ENCODE measurements at regions of chr10 and their contacts with region 1.

Region 1: GRCh38 chr10:100148353-100149211 is 37.2 kb downstream of the ERLIN1 start:
- DNase-seq: no peak
- H3K4me3 Mint-ChIP-seq: peak overlapping the region; percentile 40
- H3K27ac Mint-ChIP-seq: peak overlapping the region; percentile 92
- H3K4me1 Mint-ChIP-seq: peaks cover 26% of the 10 kb centered on the region
- H3K27me3 Mint-ChIP-seq: peaks cover 2% of the 10 kb centered on the region

Region 2: GRCh38 chr10:100100651-100101184 is 47.9 kb before region 1 on chr10:
- intact Hi-C with region 1: no loop called
- DNase-seq: no peak
- H3K4me3 Mint-ChIP-seq: no peak overlapping the region
- H3K27ac Mint-ChIP-seq: no peak overlapping the region
- H3K4me1 Mint-ChIP-seq: no peaks in the 10 kb centered on the region
- H3K27me3 Mint-ChIP-seq: peaks cover 36% of the 10 kb centered on the region

Region 3: DNA sequence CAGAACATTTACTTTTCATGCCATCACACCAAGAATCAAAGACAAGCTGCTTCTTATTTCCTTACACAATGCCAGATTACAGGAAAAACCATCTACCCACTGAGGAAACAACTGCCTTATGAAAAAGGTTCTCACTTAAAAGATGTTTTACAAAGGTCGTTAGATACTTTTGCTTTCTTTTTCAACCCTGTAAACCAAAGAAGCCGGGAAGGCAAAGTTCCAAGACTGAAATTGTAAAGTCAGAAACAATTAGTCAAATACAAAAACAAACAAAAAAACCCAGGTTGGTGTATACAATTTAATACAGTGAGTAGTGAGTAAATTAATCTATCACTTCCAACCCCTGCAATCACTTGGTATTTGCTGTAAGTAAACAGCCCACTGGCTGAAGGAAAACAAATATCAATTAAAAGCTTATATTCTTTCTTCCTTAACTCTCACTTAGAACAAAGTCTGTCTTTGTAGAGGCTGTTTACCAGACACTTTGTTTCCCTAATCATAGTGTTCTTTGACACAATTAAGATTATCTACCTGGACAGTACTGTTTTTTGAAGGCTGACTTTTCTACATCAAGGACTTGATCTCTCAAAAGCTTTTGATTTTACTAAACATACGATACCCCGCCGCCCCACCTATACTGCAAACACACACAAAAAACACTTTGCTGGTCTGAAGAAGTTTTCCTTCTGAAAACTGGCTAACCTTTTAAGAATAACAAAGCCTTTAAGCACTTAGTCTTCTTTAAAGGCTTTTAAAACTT is 19.2 kb after region 1 on chr10:
- intact Hi-C with region 1: loop called (anchors 2 kb)
- DNase-seq: no peak
- H3K4me3 Mint-ChIP-seq: peak overlapping the region; percentile 74
- H3K27ac Mint-ChIP-seq: peak overlapping the region; percentile 77
- H3K4me1 Mint-ChIP-seq: peaks cover 34% of the 10 kb centered on the region
- H3K27me3 Mint-ChIP-seq: no peaks in the 10 kb centered on the region

Region 4: DNA sequence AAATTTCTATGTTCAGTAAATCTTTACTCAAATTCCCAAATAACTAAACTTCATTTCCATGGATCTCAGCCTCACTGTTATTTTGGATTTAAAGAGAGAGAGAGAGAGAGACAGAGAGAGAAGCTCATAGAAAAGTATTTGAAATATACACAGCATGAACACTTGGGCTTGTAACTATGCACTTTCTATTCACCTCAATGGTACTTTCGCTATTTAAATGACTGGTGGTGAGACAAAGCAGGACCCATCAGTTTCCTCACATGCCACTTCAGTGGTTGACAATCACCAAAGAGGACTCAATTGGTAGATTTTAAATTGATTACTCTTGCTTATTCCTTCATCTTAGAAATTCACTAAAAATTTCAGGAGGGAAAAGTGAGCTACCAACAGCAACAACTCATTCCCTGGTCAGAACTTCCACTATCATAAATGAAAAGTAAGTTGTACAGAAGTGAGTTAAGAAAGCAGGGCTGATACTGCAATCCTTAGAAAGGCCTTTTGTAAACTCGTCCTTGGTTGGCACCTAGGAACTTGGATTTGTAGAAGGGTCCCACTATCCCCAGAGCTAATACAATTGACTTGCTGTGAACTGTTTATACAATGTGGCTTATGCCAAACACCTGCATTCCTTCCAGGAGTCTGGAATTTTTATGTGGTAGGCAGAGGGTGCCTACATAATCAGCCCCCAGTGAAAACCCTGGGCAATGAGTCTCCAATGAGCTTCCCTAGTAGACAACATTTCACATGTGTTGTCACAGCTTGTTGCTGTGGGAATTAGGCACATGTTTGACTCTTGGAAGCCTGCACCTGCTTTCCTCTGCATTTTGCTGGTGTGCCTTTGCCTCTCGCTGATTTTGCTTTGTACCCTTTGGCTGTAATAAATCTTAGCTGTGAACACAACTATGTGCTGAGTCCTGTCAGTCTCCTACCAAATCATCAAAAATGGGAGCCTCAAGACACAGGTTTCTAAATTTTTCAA is 26.4 kb after region 1 on chr10:
- intact Hi-C with region 1: loop called (anchors 1 kb)
- DNase-seq: no peak
- H3K4me3 Mint-ChIP-seq: peak overlapping the region; percentile 20
- H3K27ac Mint-ChIP-seq: peak overlapping the region; percentile 41
- H3K4me1 Mint-ChIP-seq: peaks cover 42% of the 10 kb centered on the region
- H3K27me3 Mint-ChIP-seq: no peaks in the 10 kb centered on the region